ENCODE measurements at regions of chr19 and their contacts with region 1.

Region 1: DNA sequence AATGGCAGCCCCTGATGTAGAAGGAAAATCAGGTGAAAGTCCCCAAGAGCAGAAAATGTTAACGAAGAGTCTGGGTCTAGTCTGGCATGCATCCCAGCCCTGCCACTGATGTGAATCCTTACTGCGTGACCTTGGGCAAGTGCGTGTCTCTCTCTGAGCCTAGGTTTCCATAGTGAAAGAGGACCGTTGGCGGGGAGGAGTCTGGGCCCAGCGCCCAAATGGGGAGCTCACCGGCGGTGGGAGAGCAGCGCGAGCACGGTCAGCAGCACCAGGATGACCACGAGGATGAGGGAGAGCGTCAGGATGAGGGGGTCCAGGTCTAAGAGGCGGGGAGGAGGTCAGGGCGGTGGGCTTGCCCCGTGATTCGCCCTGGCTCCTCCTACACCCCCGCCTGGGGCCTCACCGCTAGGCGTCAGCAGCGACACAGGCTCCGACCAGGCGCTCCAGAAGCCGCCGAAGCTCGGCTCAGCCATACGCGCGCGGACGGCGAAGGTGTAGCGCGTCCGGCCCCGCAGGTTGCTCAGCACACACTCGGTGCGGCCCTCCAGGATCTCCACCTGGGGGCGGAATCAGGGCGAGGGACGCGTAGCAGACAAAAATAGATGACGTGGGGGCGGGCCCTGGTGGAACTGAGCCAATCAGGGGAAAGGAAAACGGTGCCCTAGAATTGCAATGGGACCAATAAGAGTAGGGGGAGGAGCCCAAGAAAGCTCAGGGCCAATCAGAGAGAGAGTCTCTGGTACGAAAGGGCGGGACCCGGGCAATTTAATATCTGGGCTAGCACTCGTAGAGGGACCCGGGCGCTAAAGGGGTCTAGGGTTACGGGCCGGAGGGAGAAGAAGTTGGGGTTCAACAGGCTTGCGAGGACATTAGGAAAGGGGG is 3.2 kb downstream of the EPOR start:
- DNase-seq: peak; percentile 98
- ATAC-seq: peak; percentile 82
- H3K4me3 Mint-ChIP-seq: peak overlapping the region; percentile 91
- H3K27ac Mint-ChIP-seq: peak overlapping the region; percentile 100
- H3K4me1 Mint-ChIP-seq: peaks cover 32% of the 10 kb centered on the region
- H3K27me3 Mint-ChIP-seq: peaks cover 3% of the 10 kb centered on the region; the same call in 1 of the 2 replicates
- CTCF ChIP-seq: no peak; the same call in 1 of the 2 replicates

Region 2: GRCh38 chr19:11288343-11288742 is 92.6 kb before region 1 on chr19:
- CTCF ChIA-PET with region 1: interaction called, 59 read pairs
- POLR2A ChIA-PET with region 1: no interaction called
- DNase-seq: no peak
- ATAC-seq: no peak
- H3K4me3 Mint-ChIP-seq: no peak overlapping the region
- H3K27ac Mint-ChIP-seq: no peak overlapping the region
- H3K4me1 Mint-ChIP-seq: no peaks in the 10 kb centered on the region
- H3K27me3 Mint-ChIP-seq: no peaks in the 10 kb centered on the region
- CTCF ChIP-seq: no peak

Region 3: GRCh38 chr19:11361037-11361770 is 19.7 kb before region 1 on chr19:
- CTCF ChIA-PET with region 1: interaction called, 33 read pairs
- POLR2A ChIA-PET with region 1: interaction called, 5 read pairs
- DNase-seq: peak; percentile 100
- ATAC-seq: peak; percentile 91
- H3K4me3 Mint-ChIP-seq: peak overlapping the region; percentile 76
- H3K27ac Mint-ChIP-seq: no peak overlapping the region
- H3K4me1 Mint-ChIP-seq: peaks cover 16% of the 10 kb centered on the region
- H3K27me3 Mint-ChIP-seq: peaks cover 53% of the 10 kb centered on the region
- CTCF ChIP-seq: no peak

Region 4: GRCh38 chr19:11399667-11400066 is 18.8 kb after region 1 on chr19:
- CTCF ChIA-PET with region 1: interaction called, 30 read pairs
- POLR2A ChIA-PET with region 1: interaction called, 4 read pairs
- DNase-seq: no peak
- ATAC-seq: no peak
- H3K4me3 Mint-ChIP-seq: no peak overlapping the region
- H3K27ac Mint-ChIP-seq: no peak overlapping the region
- H3K4me1 Mint-ChIP-seq: peaks cover 6% of the 10 kb centered on the region
- H3K27me3 Mint-ChIP-seq: no peaks in the 10 kb centered on the region; the same call in 1 of the 2 replicates
- CTCF ChIP-seq: no peak

Region 5: DNA sequence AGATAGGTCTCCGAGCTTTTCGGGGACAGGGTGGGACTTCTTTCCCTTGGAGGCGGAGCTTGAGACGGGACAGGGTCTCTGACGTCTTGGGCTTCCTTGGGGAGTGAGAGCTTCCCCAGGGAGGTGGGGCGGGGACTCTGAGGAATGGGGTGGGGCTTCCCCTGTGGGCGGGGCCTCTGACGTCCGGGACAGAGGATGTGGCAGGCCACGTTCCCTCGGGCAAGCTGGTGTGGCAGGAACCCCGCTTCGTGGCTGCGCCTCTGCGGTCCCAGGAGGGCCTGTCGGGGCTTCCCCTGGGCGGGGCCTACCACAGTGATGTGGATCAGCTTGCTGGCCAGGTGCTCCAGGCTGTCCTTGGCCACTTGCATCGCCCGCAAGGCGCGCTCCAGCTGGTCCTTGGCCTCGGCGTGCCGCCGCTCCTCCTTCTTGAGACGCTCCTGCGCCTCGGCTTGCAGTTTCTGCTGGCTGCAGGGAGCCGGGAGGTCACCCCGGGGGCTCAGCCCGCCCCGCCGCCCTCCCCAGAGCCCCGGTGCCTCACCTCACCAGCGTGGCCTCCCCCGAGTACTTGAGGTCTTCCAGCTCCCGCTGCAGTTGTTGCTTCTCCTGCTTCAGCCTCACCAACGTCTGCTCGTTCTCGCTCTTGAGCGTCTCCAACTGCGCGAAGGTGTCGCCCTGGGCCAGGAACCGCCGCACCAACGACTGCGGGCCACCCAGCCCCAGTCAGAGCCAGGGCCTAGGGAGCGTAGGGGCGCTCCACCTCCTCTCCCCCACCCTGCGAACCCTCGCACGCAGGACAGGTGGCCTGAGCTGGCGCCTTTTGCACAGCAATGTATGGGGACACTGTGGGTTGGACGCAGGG is 41.5 kb after region 1 on chr19:
- CTCF ChIA-PET with region 1: interaction called, 308 read pairs
- POLR2A ChIA-PET with region 1: interaction called, 115 read pairs
- DNase-seq: peak; percentile 99
- ATAC-seq: peak; percentile 70
- H3K4me3 Mint-ChIP-seq: peak overlapping the region; percentile 87
- H3K27ac Mint-ChIP-seq: peak overlapping the region; percentile 97
- H3K4me1 Mint-ChIP-seq: peaks cover 15% of the 10 kb centered on the region
- H3K27me3 Mint-ChIP-seq: peaks cover 29% of the 10 kb centered on the region
- CTCF ChIP-seq: no peak

Region 6: GRCh38 chr19:11453468-11454341 is 72.8 kb after region 1 on chr19:
- CTCF ChIA-PET with region 1: interaction called, 27 read pairs
- POLR2A ChIA-PET with region 1: no interaction called
- DNase-seq: peak; percentile 64
- ATAC-seq: peak; percentile 49
- H3K4me3 Mint-ChIP-seq: no peak overlapping the region; the same call in 1 of the 2 replicates
- H3K27ac Mint-ChIP-seq: peak overlapping the region; percentile 93
- H3K4me1 Mint-ChIP-seq: peaks cover 28% of the 10 kb centered on the region
- H3K27me3 Mint-ChIP-seq: no peaks in the 10 kb centered on the region; the same call in 1 of the 2 replicates
- CTCF ChIP-seq: peak; percentile 46; the same call in 1 of the 2 replicates

Measured in WTC11 (cell line).